Endothelial cell of umbilical vein (primary cell): ENCODE measurements at regions of chrX and their contacts with region 1.

Region 1: DNA sequence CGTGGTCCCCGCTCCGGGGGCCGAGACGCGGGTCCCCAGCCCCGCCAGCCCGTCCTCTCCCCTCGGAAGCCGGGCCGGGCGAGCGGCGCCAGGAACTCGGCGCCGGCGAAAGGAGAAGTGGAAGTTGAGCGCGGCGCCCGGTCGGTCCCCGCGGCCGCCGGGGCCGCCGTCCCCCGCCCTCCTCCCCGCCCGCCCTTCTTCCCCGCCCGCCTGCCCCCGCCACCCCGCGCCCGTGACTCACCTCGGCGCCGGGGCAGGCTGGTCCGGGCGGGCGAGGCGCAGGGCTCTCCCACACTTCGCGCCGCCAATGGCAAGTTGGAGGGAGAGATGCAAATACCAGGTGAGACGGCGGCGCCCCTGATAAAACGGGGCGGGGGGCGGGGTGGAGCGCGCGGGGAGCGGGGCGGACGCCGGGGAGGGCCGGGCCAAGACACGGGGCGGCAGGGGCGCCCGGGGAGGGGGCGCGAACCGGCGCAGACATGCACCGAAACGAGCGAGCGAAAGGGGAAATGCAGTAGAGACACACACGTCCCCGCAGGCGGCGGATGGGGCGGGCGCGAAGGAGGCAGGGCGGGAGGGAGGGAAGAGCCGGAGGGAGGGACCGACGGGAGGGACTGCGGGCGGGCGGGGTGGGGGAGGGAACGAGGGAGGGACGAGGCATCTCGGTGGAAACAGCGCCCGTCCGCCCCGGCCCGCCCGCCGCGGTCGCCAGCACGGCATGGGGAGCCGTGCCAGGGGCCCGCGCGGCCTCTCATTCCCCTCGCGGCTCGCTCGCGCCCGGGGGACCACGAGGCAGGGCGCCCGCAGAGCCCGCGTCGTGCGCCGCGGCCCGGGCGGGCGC is at the start of gene ELF4:
- DNase-seq: no peak
- H3K4me3 ChIP-seq: peak within 1 kb of the TSS; percentile 11 to 78 (median 61)
- H3K27ac ChIP-seq: peak within 1 kb of the TSS; percentile 84
- H3K4me1 ChIP-seq: peaks cover 30% of the 10 kb centered on the region
- H3K27me3 ChIP-seq: no peaks in the 10 kb centered on the region
- CTCF ChIP-seq: no peak
- POLR2A ChIP-seq: no peak
- total RNA-seq, gene ELF4: 32.9 and 33.4 TPM in 2 replicates

Region 2: GRCh38 chrX:130086447-130087206 is 24.0 kb before region 1 on chrX:
- CTCF ChIA-PET with region 1: interaction called, 7 read pairs
- POLR2A ChIA-PET with region 1: interaction called, 5 read pairs
- dilution Hi-C with region 1: no loop called
- intact Hi-C with region 1: loop called (anchors 1 kb)
- DNase-seq: no peak
- H3K4me3 ChIP-seq: no peak overlapping the region
- H3K27ac ChIP-seq: peak overlapping the region; percentile 94
- H3K4me1 ChIP-seq: peaks cover 44% of the 10 kb centered on the region
- H3K27me3 ChIP-seq: no peaks in the 10 kb centered on the region
- CTCF ChIP-seq: no peak
- POLR2A ChIP-seq: no peak

Region 3: GRCh38 chrX:130097507-130098209 is 12.9 kb before region 1 on chrX:
- CTCF ChIA-PET with region 1: interaction called, 6 read pairs
- POLR2A ChIA-PET with region 1: interaction called, 5 read pairs
- dilution Hi-C with region 1: no loop called
- intact Hi-C with region 1: loop called (anchors 1 kb)
- DNase-seq: peak; percentile 87
- H3K4me3 ChIP-seq: no peak overlapping the region
- H3K27ac ChIP-seq: peak overlapping the region; percentile 66
- H3K4me1 ChIP-seq: peaks cover 19% of the 10 kb centered on the region
- H3K27me3 ChIP-seq: no peaks in the 10 kb centered on the region
- CTCF ChIP-seq: no peak
- POLR2A ChIP-seq: no peak

Region 4: GRCh38 chrX:130120746-130121504 is 10.3 kb after region 1 on chrX:
- CTCF ChIA-PET with region 1: interaction called, 15 read pairs
- POLR2A ChIA-PET with region 1: no interaction called
- dilution Hi-C with region 1: no loop called
- intact Hi-C with region 1: loop called (anchors 1 kb)
- DNase-seq: peak; percentile 75
- H3K4me3 ChIP-seq: peak overlapping the region in 1 of 3 experiments; percentile 30
- H3K27ac ChIP-seq: peak overlapping the region; percentile 82
- H3K4me1 ChIP-seq: peaks cover 40% of the 10 kb centered on the region
- H3K27me3 ChIP-seq: no peaks in the 10 kb centered on the region
- CTCF ChIP-seq: peak; percentile 57 to 62
- POLR2A ChIP-seq: peak; percentile 41

Region 5: DNA sequence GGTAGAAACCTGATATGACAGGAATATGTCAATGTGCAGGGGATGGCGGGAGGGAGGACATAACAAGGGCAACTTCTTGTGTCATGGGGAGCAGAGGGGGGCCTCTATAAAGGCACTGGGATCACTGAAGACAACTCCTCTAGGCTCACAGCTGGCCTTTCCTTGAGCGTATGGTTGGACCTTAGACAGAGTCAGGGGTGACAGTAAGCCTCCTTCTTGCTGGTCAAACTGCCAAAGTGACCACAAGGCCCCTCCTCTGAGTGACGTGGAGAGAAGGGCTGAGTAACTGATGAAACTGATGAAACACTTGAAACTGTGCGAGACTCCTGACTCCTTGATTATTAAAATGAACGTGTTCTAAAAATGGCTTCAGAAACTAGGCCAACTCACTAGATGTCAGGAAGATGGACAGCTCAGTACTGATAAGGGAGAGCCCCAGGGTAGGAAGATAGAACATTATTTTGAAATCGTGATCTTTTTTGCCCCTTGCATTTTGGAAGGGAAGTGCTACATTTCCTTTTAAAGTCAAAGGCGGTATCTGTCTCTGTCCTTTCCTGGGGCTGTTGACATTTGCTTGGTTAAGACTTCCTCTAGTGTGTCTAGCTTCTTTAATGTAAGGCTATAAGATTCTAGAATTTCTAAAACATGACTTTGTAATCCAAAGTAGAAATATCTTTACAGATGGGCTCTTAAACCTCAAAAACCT is 62.7 kb after region 1 on chrX:
- CTCF ChIA-PET with region 1: no interaction called
- POLR2A ChIA-PET with region 1: no interaction called
- dilution Hi-C with region 1: no loop called
- intact Hi-C with region 1: loop called (anchors 2 kb)
- DNase-seq: peak; percentile 48
- H3K4me3 ChIP-seq: no peak overlapping the region
- H3K27ac ChIP-seq: peak overlapping the region; percentile 69
- H3K4me1 ChIP-seq: peaks cover 26% of the 10 kb centered on the region
- H3K27me3 ChIP-seq: no peaks in the 10 kb centered on the region
- CTCF ChIP-seq: no peak
- POLR2A ChIP-seq: no peak

Region 6: DNA sequence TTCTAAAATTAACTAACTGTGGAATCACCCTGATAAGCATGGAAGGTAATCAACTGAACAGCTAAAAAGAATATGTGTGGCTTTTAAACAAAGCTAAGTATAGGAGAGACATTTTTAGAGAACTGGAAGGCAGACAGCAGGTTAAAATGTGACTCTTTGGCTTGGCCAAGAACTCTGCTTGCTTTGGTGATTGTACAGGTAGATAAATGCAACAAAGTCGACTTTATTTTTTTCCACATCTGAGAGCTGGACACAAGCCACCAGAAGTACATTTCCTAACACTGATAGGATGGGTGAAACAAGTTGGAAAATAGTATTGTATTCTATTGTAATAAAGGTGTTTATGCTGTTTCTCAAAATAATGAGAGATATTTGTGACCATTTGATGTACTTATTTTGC is 375.3 kb after region 1 on chrX:
- CTCF ChIA-PET with region 1: no interaction called
- POLR2A ChIA-PET with region 1: no interaction called
- dilution Hi-C with region 1: no loop called
- intact Hi-C with region 1: no loop called
- DNase-seq: no peak
- H3K4me3 ChIP-seq: no peak overlapping the region
- H3K27ac ChIP-seq: no peak overlapping the region
- H3K4me1 ChIP-seq: no peaks in the 10 kb centered on the region
- H3K27me3 ChIP-seq: no peaks in the 10 kb centered on the region
- CTCF ChIP-seq: no peak
- POLR2A ChIP-seq: no peak